Dendritic cell treated with granulocyte-macrophage colony-stimulating factor and Interleukin-4, amounts not matched to agents 40 ng/mL and 50 ng/mL, for 4 days (primary cell): ENCODE measurements at regions of chr5 and their contacts with region 1.

Region 1: DNA sequence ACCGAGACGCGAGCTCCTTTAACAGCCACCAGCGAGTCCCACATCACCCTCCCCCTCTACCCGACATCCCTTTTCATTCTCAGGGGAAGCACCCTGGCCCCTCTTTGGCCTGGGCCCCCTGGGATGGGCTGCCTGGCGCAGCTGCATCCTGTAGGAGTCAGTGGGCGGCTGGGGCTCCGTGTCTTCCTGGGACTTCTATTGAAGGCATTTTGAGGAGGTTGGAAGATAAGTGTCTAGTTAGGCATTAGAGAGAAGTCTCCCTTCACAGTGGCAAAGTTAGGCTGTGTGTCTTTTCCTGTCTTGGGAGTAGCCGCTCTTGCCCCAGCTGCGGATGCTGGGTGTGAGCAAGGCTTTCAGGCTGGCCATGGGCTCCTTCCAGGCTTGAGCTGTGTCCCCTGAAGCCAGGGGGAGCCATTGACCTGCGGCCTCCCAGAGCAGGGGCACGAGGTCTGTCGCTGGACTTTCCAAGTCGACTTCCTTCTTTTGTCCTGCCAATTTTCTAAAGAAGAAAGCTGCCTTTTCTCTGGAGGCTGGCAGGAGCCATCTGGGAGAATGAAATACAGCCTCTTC is 18.6 kb upstream of the NKD2 start:
- H3K4me3 Mint-ChIP-seq: peak overlapping the region; percentile 37
- H3K27ac Mint-ChIP-seq: peak overlapping the region; percentile 83
- H3K4me1 Mint-ChIP-seq: peaks cover 13% of the 10 kb centered on the region
- H3K27me3 Mint-ChIP-seq: peaks cover 51% of the 10 kb centered on the region

Region 2: DNA sequence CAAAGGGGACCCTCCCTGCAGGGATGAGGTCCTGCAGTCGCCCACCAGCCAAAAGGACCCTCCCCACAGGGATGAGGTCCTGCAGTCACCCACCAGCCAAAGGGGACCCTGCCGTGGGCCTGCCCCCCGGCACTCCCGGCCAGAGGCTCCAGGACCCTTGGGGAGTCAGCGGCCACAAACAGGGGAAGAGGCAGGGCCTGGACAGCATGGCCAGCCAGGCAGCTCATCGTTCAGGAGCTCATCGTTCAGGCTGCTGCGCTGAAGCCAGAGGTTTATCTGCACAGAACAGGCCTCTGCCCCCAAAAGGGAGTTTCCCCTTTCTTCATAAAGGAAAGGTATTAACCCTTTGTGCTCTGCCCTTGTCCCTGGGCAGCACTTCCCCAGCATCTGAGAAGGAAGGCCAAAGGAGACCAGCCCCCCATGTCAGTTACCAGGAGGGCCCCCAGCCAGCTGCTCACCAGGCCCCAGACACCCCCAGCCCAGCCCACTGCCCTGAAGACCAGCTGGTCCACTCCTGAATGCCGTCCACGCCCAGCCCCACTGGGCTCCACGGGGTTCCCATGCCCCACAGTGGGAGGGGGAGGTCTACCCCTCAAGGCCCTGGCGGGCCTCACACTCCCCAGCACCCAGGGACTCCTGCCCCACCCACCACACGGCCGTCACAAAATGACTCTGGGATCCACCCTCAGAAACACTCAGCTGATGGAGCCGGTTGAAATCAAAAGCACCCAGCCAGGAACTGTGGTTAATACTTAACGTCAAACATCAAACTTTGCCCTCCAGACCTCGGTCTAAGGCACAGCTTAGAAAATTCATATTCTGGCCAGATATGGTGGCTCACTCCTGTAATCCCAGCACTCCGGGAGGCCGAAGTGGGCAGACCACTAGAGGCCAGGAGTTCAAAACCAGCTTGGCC is 115.6 kb after region 1 on chr5:
- intact Hi-C with region 1: loop called (anchors 10 kb)
- H3K4me3 Mint-ChIP-seq: peak overlapping the region; percentile 76
- H3K27ac Mint-ChIP-seq: peak overlapping the region; percentile 91
- H3K4me1 Mint-ChIP-seq: peaks cover 98% of the 10 kb centered on the region
- H3K27me3 Mint-ChIP-seq: no peaks in the 10 kb centered on the region